ENCODE measurements at regions of chr2 and their contacts with region 1.

Region 1: DNA sequence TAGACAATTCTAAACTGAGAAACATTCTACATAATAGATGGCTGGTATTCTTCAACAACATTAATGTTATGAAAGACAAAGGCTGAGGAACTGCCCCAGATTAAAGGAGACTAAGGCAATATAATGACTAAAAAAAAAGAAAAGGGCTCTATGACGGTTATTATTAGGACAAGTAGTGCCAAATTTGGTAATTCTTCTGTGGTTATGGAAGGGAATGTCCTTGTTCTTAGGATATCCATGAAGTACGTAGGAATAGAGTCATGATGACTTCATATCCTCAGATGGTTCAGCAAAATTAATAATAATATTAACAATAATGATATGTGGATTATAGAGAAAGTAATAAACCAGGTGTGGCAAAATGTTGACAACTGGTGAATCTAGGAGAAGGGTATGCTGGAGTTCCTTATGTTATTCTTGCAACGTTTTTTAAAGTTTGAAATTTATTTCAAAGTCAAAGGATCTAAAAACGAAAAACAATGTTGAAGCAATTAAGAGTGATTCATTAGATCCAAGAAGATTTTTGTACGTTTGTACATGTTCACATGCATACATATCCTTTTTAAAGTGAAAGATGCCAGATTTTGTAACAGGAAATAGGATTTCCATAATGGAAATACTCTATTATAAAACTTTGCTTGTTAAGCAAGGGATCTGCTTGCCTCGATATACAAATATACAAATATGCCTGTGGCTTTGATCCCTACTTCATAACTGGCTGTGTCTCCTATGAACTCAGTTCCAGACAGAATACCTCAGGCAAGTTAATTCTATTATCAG is 27.7 kb upstream of the STRN start:
- DNase-seq: no peak
- ATAC-seq: no peak

Region 2: DNA sequence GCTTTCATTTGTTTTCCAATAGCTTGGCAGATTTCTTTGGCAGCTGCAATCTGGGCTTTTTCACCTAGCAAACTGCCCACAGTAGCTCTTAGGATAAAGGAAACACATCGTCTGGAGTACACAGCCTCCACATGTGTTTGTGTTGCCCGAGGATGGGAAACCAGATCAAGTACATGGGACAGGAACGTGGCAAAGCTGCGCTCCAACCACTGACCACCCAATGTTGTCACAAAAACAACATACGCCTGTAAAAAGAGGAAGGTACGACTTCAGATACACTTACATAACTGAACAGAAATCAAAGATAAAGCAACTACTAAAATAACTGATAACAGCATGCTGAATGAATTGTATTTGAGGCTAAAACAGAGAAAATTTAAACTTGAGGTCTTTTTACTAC is 74.7 kb after region 1 on chr2:
- intact Hi-C with region 1: loop called (anchors 10 kb)
- DNase-seq: no peak
- ATAC-seq: no peak

Region 3: DNA sequence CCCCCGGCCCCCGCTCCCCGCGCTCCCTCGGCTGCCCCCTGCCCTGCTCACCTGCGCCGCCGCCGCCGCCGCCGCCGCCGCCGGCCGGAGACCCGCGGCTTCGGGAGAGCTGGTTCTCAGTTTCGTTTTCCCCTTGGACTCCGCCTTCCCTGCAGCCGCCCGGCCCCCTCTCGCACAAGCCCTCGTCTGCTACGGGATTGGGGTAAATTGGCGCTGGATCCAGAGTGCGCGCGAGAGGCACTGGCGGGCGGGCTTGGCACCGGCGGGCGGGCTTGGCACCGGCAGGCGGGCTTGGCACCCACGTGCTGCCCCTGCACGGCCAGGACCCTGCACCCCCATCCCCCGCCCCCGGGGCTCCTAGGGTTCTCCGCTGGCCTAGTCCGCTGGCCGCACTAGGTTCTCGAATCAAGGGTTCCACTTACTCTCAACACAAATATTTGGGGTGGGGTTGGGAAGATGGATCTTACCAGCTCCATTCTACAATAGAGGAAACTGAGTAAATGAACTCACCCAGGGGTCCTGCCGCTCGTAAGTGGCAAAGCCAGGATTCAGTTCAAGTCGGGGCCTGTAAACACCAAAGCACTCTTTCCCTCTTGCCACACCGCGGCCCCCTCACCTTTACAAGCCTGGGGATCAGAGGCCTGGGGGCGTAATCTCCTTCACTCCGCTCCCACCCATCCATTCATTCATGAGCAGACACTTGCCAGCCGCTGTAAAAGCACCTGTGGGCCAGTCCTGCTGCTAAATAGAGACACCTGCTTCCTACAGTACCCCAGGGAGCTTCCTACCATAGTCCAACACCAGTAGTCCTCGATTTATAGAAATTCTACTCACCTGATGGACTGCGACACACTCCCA is 163.1 kb after region 1 on chr2 and contains the start of gene EIF2AK2:
- intact Hi-C with region 1: no loop called
- DNase-seq: peak; percentile 91
- ATAC-seq: peak; percentile 97
- total RNA-seq, gene EIF2AK2: 17.5 TPM

Measured in Right ventricle myocardium superior (tissue), 1 donor.